ENCODE measurements at regions of chr11 and their contacts with region 1.

Region 1: GRCh38 chr11:7098235-7098832 is 9.5 kb downstream of the RBMXL2 start:
- DNase-seq: no peak
- ATAC-seq: peak in 3 of 4 donors; percentile 15 to 72 (median 66)
- H3K4me3 ChIP-seq: no peak overlapping the region
- H3K27ac ChIP-seq: no peak overlapping the region
- H3K4me1 ChIP-seq: no peaks in the 10 kb centered on the region
- H3K27me3 ChIP-seq: peaks cover 0 to 27% (median 0%) of the 10 kb centered on the region in 9 donors
- CTCF ChIP-seq: peak; percentile 39 to 76 (median 59)
- POLR2A ChIP-seq: no peak

Region 2: GRCh38 chr11:6876914-6877313 is 221.4 kb before region 1 on chr11:
- intact Hi-C with region 1: no loop called
- DNase-seq: no peak
- ATAC-seq: no peak
- H3K4me3 ChIP-seq: no peak overlapping the region
- H3K27ac ChIP-seq: no peak overlapping the region
- H3K4me1 ChIP-seq: no peaks in the 10 kb centered on the region
- H3K27me3 ChIP-seq: no peaks in the 10 kb centered on the region
- CTCF ChIP-seq: no peak
- POLR2A ChIP-seq: no peak

Region 3: GRCh38 chr11:7056828-7057513 is 41.4 kb before region 1 on chr11:
- intact Hi-C with region 1: no loop called
- DNase-seq: no peak
- ATAC-seq: peak in 1 of 4 donors; percentile 31
- H3K4me3 ChIP-seq: no peak overlapping the region
- H3K27ac ChIP-seq: no peak overlapping the region
- H3K4me1 ChIP-seq: peaks cover 0 to 19% (median 5%) of the 10 kb centered on the region in 12 donors
- H3K27me3 ChIP-seq: no peaks in the 10 kb centered on the region
- CTCF ChIP-seq: no peak
- POLR2A ChIP-seq: no peak

Region 4: DNA sequence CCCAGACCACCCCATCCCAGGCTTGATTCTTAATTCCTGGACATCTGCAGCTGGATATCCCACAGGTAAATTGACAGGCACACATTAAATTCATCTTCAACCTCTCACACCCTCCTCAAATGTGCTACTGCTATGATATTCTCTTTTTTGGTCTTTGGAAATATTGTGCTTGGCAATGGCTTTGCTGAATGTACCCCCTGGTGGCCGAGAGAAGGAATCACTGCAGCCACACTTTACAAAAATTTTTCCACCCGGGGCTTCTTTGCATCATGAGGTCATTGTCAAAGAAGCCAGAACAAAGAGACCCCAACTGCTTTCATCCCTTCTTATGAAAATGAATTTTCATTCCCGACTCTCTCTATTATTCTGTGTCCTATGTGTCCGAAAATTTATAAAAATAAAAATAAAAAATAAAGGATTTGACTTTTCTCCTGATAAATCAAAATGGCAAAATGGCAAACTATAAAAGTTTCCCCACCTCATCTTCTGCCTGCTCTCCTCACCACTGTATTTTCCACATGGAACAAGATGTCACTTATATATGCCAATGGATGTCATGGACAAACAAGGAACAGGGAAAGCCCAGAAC is 590.0 kb after region 1 on chr11:
- intact Hi-C with region 1: loop called in 7 of 10 experiments (anchors 5 to 10 kb)
- DNase-seq: no peak
- ATAC-seq: peak in 1 of 4 donors; percentile 36
- H3K4me3 ChIP-seq: no peak overlapping the region
- H3K27ac ChIP-seq: no peak overlapping the region
- H3K4me1 ChIP-seq: no peaks in the 10 kb centered on the region
- H3K27me3 ChIP-seq: peaks cover 0 to 20% (median 0%) of the 10 kb centered on the region in 9 donors
- CTCF ChIP-seq: peak; percentile 62 to 79 (median 72)
- POLR2A ChIP-seq: no peak

Region 5: GRCh38 chr11:7694235-7694634 is 595.9 kb after region 1 on chr11:
- intact Hi-C with region 1: loop called in 8 of 10 experiments (anchors 2 to 10 kb)
- DNase-seq: no peak
- ATAC-seq: no peak
- H3K4me3 ChIP-seq: no peak overlapping the region
- H3K27ac ChIP-seq: no peak overlapping the region
- H3K4me1 ChIP-seq: no peaks in the 10 kb centered on the region
- H3K27me3 ChIP-seq: peaks cover 0 to 23% (median 6%) of the 10 kb centered on the region in 9 donors
- CTCF ChIP-seq: no peak
- POLR2A ChIP-seq: no peak

Region 6: DNA sequence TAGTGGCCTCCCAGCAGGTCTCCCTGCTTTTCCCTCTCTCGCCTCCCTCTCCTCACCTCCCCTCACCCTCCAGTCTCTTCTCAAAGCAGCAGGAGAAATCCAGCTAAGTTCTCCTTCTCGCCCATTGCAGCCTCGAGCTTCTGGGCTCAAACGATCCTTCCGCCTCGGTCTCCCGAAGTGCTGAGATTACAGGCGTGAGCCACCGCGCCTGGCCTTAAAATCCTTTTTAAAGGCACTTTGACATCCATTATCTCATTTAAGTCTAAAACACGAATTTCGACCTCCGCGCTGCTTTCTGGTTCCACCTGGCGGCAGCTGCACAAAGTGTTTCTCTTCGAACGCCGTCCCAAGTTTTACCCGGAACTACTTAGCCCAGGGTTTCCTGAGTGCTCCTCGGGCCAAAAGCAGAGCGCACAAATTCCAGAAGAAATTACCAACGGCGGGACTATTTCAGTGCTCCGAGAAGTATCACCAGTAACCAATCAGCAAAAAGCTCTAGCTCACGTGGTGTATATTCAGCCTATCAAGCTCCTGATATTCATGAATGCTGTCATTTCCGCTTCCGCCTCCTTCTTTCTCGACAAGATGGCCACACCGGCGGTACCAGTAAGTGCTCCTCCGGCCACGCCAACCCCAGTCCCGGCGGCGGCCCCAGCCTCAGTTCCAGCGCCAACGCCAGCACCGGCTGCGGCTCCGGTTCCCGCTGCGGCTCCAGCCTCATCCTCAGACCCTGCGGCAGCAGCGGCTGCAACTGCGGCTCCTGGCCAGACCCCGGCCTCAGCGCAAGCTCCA is 888.6 kb after region 1 on chr11 and contains the start of gene EIF3F:
- intact Hi-C with region 1: loop called (anchors 2 to 10 kb)
- DNase-seq: peak; percentile 87 to 96 (median 91)
- ATAC-seq: peak; percentile 99 to 100 (median 100)
- H3K4me3 ChIP-seq: peak within 1 kb of the TSS; percentile 64 to 93 (median 74)
- H3K27ac ChIP-seq: peak within 1 kb of the TSS; percentile 11 to 82 (median 67)
- H3K4me1 ChIP-seq: peaks cover 9 to 36% (median 25%) of the 10 kb centered on the region in 12 donors
- H3K27me3 ChIP-seq: no peaks in the 10 kb centered on the region
- CTCF ChIP-seq: peak; percentile 75 to 96 (median 84)
- POLR2A ChIP-seq: peak in 1 of 2 donors; percentile 52
- total RNA-seq, gene EIF3F: 134 to 181 (median 147) TPM

Measured in heart left ventricle (tissue), 16 donors.